CD8-positive, alpha-beta T cell (primary cell): ENCODE measurements at regions of chr5 and their contacts with region 1.

Region 1: GRCh38 chr5:102792705-102793104 is 37.6 kb downstream of the PAM start:
- DNase-seq: peak in 2 of 9 experiments; percentile 42 to 58
- ATAC-seq: peak; percentile 56
- H3K4me3 ChIP-seq: no peak overlapping the region
- H3K4me3 Mint-ChIP-seq: no peak overlapping the region
- H3K27ac ChIP-seq: no peak overlapping the region
- H3K27ac Mint-ChIP-seq: no peak overlapping the region
- H3K4me1 ChIP-seq: no peaks in the 10 kb centered on the region
- H3K4me1 Mint-ChIP-seq: peaks cover 15% of the 10 kb centered on the region
- H3K27me3 ChIP-seq: no peaks in the 10 kb centered on the region
- H3K27me3 Mint-ChIP-seq: no peaks in the 10 kb centered on the region
- CTCF ChIP-seq: no peak

Region 2: GRCh38 chr5:102570748-102571147 is 222.0 kb before region 1 on chr5:
- CTCF ChIA-PET with region 1: no interaction called
- POLR2A ChIA-PET with region 1: no interaction called
- intact Hi-C with region 1: no loop called
- DNase-seq: no peak
- ATAC-seq: no peak
- H3K4me3 ChIP-seq: no peak overlapping the region
- H3K4me3 Mint-ChIP-seq: no peak overlapping the region
- H3K27ac ChIP-seq: no peak overlapping the region
- H3K27ac Mint-ChIP-seq: no peak overlapping the region
- H3K4me1 ChIP-seq: no peaks in the 10 kb centered on the region
- H3K4me1 Mint-ChIP-seq: no peaks in the 10 kb centered on the region
- H3K27me3 ChIP-seq: peaks cover 0 to 3% of the 10 kb centered on the region in 2 experiments
- H3K27me3 Mint-ChIP-seq: peaks cover 11% of the 10 kb centered on the region
- CTCF ChIP-seq: no peak

Region 3: GRCh38 chr5:102681407-102681983 is 111.2 kb before region 1 on chr5:
- CTCF ChIA-PET with region 1: interaction called, 5 read pairs
- POLR2A ChIA-PET with region 1: no interaction called
- intact Hi-C with region 1: loop called (anchors 5 kb)
- DNase-seq: peak; percentile 8 to 69 (median 47)
- ATAC-seq: no peak
- H3K4me3 ChIP-seq: no peak overlapping the region
- H3K4me3 Mint-ChIP-seq: no peak overlapping the region
- H3K27ac ChIP-seq: no peak overlapping the region
- H3K27ac Mint-ChIP-seq: no peak overlapping the region
- H3K4me1 ChIP-seq: no peaks in the 10 kb centered on the region
- H3K4me1 Mint-ChIP-seq: no peaks in the 10 kb centered on the region
- H3K27me3 ChIP-seq: no peaks in the 10 kb centered on the region
- H3K27me3 Mint-ChIP-seq: peaks cover 2% of the 10 kb centered on the region
- CTCF ChIP-seq: peak; percentile 55

Region 4: DNA sequence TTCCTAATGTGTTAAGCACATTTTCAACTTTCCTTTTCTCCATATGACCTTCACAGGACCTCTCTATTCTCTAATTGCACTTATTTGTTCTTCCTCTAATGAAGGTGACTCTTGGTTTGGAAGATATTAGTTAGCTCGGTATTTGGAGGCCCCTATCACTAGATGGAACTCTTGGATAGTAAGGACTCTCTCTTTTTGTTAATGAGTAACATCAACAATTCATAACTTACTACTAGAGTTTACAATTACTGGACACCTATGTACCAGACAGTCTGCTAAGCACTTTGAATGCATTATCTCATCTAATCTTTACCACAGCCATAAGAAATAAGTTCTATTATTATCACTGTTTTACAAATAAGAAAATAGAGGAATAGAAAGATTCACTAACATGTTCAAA is 61.0 kb before region 1 on chr5:
- CTCF ChIA-PET with region 1: no interaction called
- POLR2A ChIA-PET with region 1: no interaction called
- intact Hi-C with region 1: no loop called
- DNase-seq: no peak
- ATAC-seq: no peak
- H3K4me3 ChIP-seq: no peak overlapping the region
- H3K4me3 Mint-ChIP-seq: no peak overlapping the region
- H3K27ac ChIP-seq: no peak overlapping the region
- H3K27ac Mint-ChIP-seq: no peak overlapping the region
- H3K4me1 ChIP-seq: no peaks in the 10 kb centered on the region
- H3K4me1 Mint-ChIP-seq: no peaks in the 10 kb centered on the region
- H3K27me3 ChIP-seq: no peaks in the 10 kb centered on the region
- H3K27me3 Mint-ChIP-seq: peaks cover 15% of the 10 kb centered on the region
- CTCF ChIP-seq: no peak